ENCODE measurements at regions of chr19 and their contacts with region 1.

Region 1: GRCh38 chr19:43446746-43447489 is 18.5 kb downstream of the LYPD3 start:
- DNase-seq: peak; percentile 83
- H3K4me3 ChIP-seq: no peak overlapping the region
- H3K27ac ChIP-seq: no peak overlapping the region
- H3K4me1 ChIP-seq: no peaks in the 10 kb centered on the region
- H3K27me3 ChIP-seq: no peaks in the 10 kb centered on the region
- CTCF ChIP-seq: peak; percentile 93 to 96 (median 96)
- POLR2A ChIP-seq: no peak

Region 2: GRCh38 chr19:43318796-43319314 is 128.1 kb before region 1 on chr19:
- intact Hi-C with region 1: no loop called
- DNase-seq: no peak
- H3K4me3 ChIP-seq: no peak overlapping the region
- H3K27ac ChIP-seq: no peak overlapping the region
- H3K4me1 ChIP-seq: no peaks in the 10 kb centered on the region
- H3K27me3 ChIP-seq: no peaks in the 10 kb centered on the region
- CTCF ChIP-seq: no peak
- POLR2A ChIP-seq: no peak

Region 3: DNA sequence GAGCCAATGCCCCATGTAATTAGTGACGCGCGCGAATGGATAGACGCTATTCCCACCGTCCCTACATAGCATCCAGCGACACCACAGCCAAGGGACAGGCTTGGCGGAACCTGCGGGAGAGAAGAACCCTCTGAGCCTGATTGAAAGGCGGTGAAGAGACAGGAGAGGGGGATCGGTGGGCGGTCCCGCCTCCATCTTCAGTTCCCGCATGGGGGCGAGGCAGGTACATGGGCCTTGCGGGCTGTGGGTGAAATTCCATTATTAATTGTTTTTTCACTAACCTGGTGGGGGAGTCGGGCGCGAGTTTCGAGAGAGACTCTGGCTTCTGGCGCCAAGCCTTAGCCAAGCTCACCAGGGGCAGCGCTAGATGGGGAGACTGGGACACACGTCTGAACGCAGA is 40.6 kb before region 1 on chr19:
- intact Hi-C with region 1: no loop called
- DNase-seq: no peak
- H3K4me3 ChIP-seq: peak overlapping the region in 1 of 2 donors; percentile 20
- H3K27ac ChIP-seq: no peak overlapping the region
- H3K4me1 ChIP-seq: no peaks in the 10 kb centered on the region
- H3K27me3 ChIP-seq: no peaks in the 10 kb centered on the region
- CTCF ChIP-seq: no peak
- POLR2A ChIP-seq: no peak

Region 4: DNA sequence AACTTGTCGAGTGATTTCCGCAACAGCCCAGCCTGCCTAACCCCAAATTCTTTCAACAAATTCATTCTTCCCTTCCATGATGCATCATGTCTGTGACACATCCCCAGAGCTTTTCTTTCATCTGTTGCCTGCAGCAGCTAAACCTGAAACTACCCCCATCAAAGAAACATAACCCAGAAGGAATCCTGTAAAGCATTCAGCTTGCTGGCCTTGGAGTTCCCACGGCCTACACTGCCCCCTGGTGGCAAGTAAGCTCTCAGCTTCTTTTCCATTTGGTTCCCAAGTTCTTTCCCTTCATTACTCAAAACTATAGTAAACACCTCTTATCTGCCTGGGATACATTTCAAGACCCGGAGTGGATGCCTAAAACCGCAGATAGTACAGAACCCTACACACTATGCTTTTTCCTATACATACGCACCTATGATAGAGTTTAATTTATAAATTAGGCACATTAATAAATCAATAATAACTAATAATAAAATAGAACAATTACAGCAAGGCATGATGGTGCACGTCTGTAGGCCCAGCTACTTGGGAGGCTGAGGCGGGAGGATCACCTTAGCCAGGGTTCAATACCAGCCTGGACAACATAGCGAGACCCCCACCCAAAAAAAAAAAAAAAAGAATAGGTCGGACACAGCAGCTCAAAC is 72.6 kb after region 1 on chr19:
- intact Hi-C with region 1: loop called (anchors 5 kb)
- DNase-seq: peak; percentile 85
- H3K4me3 ChIP-seq: no peak overlapping the region
- H3K27ac ChIP-seq: no peak overlapping the region
- H3K4me1 ChIP-seq: peaks cover under 1% of the 10 kb centered on the region
- H3K27me3 ChIP-seq: no peaks in the 10 kb centered on the region
- CTCF ChIP-seq: peak; percentile 89 to 92 (median 89)
- POLR2A ChIP-seq: no peak